ENCODE measurements at regions of chr5 and their contacts with region 1.

Region 1: GRCh38 chr5:6820851-6821479 is 107.7 kb downstream of the TENT4A start:
- DNase-seq: peak; percentile 83
- ATAC-seq: peak; percentile 77
- H3K4me3 Mint-ChIP-seq: no peak overlapping the region
- H3K27ac Mint-ChIP-seq: no peak overlapping the region
- H3K4me1 Mint-ChIP-seq: peaks cover 17% of the 10 kb centered on the region
- H3K27me3 Mint-ChIP-seq: no peaks in the 10 kb centered on the region; the same call in 1 of the 2 replicates
- CTCF ChIP-seq: peak; percentile 90

Region 2: GRCh38 chr5:6765612-6766525 is 55.1 kb before region 1 on chr5:
- CTCF ChIA-PET with region 1: interaction called, 33 read pairs
- POLR2A ChIA-PET with region 1: no interaction called
- DNase-seq: peak; percentile 92
- ATAC-seq: peak; percentile 93
- H3K4me3 Mint-ChIP-seq: no peak overlapping the region
- H3K27ac Mint-ChIP-seq: no peak overlapping the region
- H3K4me1 Mint-ChIP-seq: peaks cover 8% of the 10 kb centered on the region
- H3K27me3 Mint-ChIP-seq: no peaks in the 10 kb centered on the region
- CTCF ChIP-seq: peak; percentile 93

Region 3: DNA sequence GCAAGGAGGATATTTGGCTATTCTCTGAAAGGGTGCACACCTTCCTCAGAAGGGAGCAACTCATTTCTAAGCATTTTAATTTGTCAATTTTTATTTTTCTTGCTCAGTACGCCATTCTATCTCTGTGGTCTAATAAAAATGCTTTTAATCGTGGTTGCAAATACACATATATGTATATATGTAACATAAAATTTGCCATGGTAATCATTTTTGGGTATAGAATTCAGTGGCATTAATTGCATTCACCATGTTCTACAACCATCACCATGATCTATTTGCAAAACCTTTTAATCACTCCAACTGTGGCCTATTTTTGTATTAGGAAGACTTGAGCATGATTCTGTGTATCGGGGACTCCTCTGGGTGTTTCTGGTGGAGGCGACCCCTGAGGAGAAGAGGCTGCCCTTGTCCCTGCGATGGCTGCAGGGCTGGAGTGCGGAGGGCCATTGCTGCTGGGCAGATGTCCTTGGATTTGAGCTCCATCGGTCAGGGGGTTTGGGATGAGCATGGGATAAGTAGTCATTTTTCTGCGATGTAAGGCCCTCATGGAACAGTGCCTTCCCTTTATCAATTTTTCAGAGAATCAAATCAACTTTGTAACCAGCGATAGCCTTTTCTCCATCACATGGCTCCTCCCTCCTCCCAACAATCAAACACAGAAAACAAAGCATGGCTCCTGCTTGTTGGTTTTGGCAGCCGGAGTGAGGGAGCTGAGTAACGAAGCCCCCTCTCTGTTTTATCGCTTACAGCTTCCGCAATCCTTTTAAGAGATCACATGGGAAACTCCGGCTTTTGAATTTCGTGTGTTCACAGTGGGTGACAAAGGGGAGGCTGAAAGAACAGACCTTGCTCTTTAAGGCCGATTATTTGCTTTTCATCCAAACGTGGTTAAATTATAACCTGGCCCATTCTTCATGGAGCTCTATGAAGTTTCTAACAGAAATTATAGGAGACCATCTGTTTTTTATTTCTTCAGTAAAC is 79.6 kb after region 1 on chr5:
- CTCF ChIA-PET with region 1: interaction called, 16 read pairs
- POLR2A ChIA-PET with region 1: no interaction called
- DNase-seq: no peak
- ATAC-seq: no peak; the same call in 1 of the 2 replicates
- H3K4me3 Mint-ChIP-seq: no peak overlapping the region
- H3K27ac Mint-ChIP-seq: no peak overlapping the region
- H3K4me1 Mint-ChIP-seq: 0 out of 2 replicates have a peak, but pooled peaks cover 4% of the 10 kb centered on the region
- H3K27me3 Mint-ChIP-seq: 0 out of 2 replicates have a peak, but pooled peaks cover 2% of the 10 kb centered on the region
- CTCF ChIP-seq: no peak

Region 4: GRCh38 chr5:7066521-7067235 is 245.7 kb after region 1 on chr5:
- CTCF ChIA-PET with region 1: no interaction called
- POLR2A ChIA-PET with region 1: no interaction called
- DNase-seq: no peak
- ATAC-seq: peak; percentile 50; the same call in 1 of the 2 replicates
- H3K4me3 Mint-ChIP-seq: no peak overlapping the region
- H3K27ac Mint-ChIP-seq: no peak overlapping the region
- H3K4me1 Mint-ChIP-seq: peaks cover 16% of the 10 kb centered on the region
- H3K27me3 Mint-ChIP-seq: peaks cover 7% of the 10 kb centered on the region
- CTCF ChIP-seq: no peak

Region 5: GRCh38 chr5:7745882-7746610 is 925.1 kb after region 1 on chr5:
- CTCF ChIA-PET with region 1: interaction called, 17 read pairs
- POLR2A ChIA-PET with region 1: no interaction called
- DNase-seq: peak; percentile 88
- ATAC-seq: peak; percentile 96
- H3K4me3 Mint-ChIP-seq: no peak overlapping the region
- H3K27ac Mint-ChIP-seq: peak overlapping the region; percentile 96
- H3K4me1 Mint-ChIP-seq: peaks cover 7% of the 10 kb centered on the region
- H3K27me3 Mint-ChIP-seq: no peaks in the 10 kb centered on the region
- CTCF ChIP-seq: peak; percentile 92

Region 6: DNA sequence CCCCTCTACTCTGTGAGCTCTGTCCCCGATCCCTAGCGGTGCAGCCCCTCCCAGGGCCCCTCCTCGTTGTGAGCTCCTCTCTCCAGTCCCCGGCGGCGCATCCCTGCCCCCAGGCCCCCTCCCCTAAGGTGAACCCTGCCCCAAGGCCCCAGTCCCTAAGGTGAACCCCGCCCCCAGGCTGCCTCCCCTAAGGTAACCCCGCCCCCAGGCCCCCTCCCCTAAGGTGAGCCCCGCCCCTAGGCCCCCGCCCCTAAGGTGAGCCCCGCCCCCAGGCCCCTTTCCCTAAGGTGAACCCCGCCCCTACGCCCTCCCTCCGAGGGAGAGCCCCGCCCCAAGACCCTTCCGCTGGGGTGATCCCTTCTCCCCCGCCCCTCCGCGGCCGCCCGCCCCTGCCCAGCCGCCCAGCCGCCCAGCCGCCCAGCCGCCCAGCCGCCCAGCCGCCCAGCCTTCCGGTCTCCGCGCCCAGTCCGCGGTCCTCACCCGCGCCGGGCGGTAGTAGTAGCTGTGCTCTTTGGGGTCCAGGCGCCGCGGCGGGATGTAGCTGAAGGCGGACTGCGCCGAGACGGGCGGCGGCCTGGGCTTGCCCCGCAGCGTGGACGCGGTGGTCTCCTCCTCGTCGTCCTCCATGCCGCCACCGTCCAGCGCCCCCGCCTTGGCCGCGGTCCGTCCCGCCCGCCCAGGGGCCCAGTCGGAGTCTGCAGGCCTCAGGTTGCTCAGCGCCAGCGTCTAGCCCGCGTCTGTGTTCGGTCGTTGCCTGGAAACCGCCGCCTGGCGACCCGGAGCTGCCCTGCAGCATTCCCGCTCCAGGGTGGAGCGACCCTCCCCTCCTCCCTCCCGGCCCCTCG is 1029.7 kb after region 1 on chr5 and contains the start of gene CFAP90:
- CTCF ChIA-PET with region 1: interaction called, 32 read pairs
- POLR2A ChIA-PET with region 1: no interaction called
- DNase-seq: peak; percentile 91
- ATAC-seq: peak; percentile 76
- H3K4me3 Mint-ChIP-seq: peak within 1 kb of the TSS; percentile 82
- H3K27ac Mint-ChIP-seq: 0 out of 2 replicates have a peak within 1 kb of the TSS, but pooled peaks have one; percentile 53
- H3K4me1 Mint-ChIP-seq: peaks cover 7% of the 10 kb centered on the region
- H3K27me3 Mint-ChIP-seq: peaks cover 65% of the 10 kb centered on the region
- CTCF ChIP-seq: no peak
- total RNA-seq, gene CFAP90: 0.21 to 0.64 TPM (median 0.33 TPM) in 3 replicates

Measured in WTC11 (cell line).